PC-9 (cell line): ENCODE measurements at regions of chr7 and their contacts with region 1.

Region 1: GRCh38 chr7:18978108-18978495 is 139.3 kb downstream of the TWIST1 start:
- DNase-seq: no peak
- H3K4me3 ChIP-seq: no peak overlapping the region
- H3K27ac ChIP-seq: no peak overlapping the region
- H3K4me1 ChIP-seq: peaks cover 37% of the 10 kb centered on the region
- H3K27me3 ChIP-seq: no peaks in the 10 kb centered on the region
- CTCF ChIP-seq: no peak

Region 2: GRCh38 chr7:18753972-18754610 is 224.0 kb before region 1 on chr7:
- CTCF ChIA-PET with region 1: no interaction called
- POLR2A ChIA-PET with region 1: no interaction called
- intact Hi-C with region 1: loop called (anchors 5 kb)
- DNase-seq: peak in 1 of 2 experiments; percentile 9
- H3K4me3 ChIP-seq: no peak overlapping the region
- H3K27ac ChIP-seq: no peak overlapping the region
- H3K4me1 ChIP-seq: no peaks in the 10 kb centered on the region
- H3K27me3 ChIP-seq: no peaks in the 10 kb centered on the region
- CTCF ChIP-seq: no peak